ENCODE measurements at regions of chr7 and their contacts with region 1.

Region 1: DNA sequence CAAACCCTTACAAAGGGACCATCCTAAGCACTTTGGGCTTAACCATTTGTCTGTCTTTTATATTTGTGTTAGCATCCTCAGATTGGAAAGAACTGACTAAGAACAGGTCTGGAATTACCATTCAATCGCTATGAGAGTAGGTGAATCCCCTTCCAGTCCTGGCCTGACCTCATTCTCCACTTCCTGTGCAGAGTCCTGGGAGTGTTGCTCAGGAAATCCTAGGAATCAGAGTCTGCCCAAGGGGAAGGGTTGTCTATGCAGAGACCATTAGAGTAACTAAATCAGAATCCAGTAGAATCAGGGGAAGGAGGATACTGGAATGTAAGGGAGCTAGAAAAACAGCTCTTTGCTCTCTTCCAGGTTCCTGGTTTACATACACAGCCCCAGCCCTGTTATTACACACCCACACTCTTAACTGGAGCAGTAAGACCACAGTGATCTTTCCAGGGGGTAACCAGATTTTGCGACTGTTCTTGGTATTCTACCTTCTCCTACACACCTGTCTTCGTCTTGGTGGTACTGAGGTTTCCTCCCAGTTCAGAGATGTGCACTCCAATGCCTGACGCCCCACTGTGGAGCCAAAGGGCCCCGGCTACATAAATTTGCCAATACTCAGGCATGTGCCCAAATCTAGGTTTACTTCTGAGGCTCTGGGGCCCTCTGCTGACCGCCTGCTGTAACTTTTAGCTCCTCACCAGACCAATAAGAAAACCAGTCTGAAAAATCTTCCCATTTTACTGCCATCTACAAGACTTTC is 103.7 kb downstream of the RNF216 start:
- DNase-seq: no peak
- ATAC-seq: peak; percentile 81
- H3K4me3 ChIP-seq: no peak overlapping the region
- H3K27ac ChIP-seq: peak overlapping the region; percentile 10
- H3K4me1 ChIP-seq: peaks cover 50% of the 10 kb centered on the region
- H3K27me3 ChIP-seq: no peaks in the 10 kb centered on the region
- CTCF ChIP-seq: peak; percentile 68 to 74 (median 69)
- EP300 ChIP-seq: no peak
- POLR2A ChIP-seq: no peak
- RAD21 ChIP-seq: peak; percentile 77

Region 2: GRCh38 chr7:5657901-5658300 is 19.8 kb before region 1 on chr7:
- CTCF ChIA-PET with region 1: interaction called, 11 read pairs
- POLR2A ChIA-PET with region 1: no interaction called
- RAD21 ChIA-PET with region 1: interaction called, 10 read pairs
- SMC1A ChIA-PET with region 1: interaction called, 6 read pairs
- in situ Hi-C with region 1: no loop called
- intact Hi-C with region 1: no loop called
- DNase-seq: no peak
- ATAC-seq: no peak
- H3K4me3 ChIP-seq: no peak overlapping the region
- H3K27ac ChIP-seq: no peak overlapping the region
- H3K4me1 ChIP-seq: peaks cover 9% of the 10 kb centered on the region
- H3K27me3 ChIP-seq: no peaks in the 10 kb centered on the region
- CTCF ChIP-seq: no peak
- EP300 ChIP-seq: no peak
- POLR2A ChIP-seq: no peak
- RAD21 ChIP-seq: no peak

Region 3: GRCh38 chr7:5665094-5666025 is 12.4 kb before region 1 on chr7:
- CTCF ChIA-PET with region 1: interaction called, 108 read pairs
- POLR2A ChIA-PET with region 1: interaction called, 4 read pairs
- RAD21 ChIA-PET with region 1: interaction called, 32 read pairs
- SMC1A ChIA-PET with region 1: interaction called, 40 read pairs
- in situ Hi-C with region 1: no loop called
- intact Hi-C with region 1: no loop called
- DNase-seq: peak; percentile 53
- ATAC-seq: peak; percentile 94
- H3K4me3 ChIP-seq: no peak overlapping the region
- H3K27ac ChIP-seq: no peak overlapping the region
- H3K4me1 ChIP-seq: peaks cover 12% of the 10 kb centered on the region
- H3K27me3 ChIP-seq: no peaks in the 10 kb centered on the region
- CTCF ChIP-seq: peak; percentile 71 to 90 (median 82)
- EP300 ChIP-seq: no peak
- POLR2A ChIP-seq: no peak
- RAD21 ChIP-seq: peak; percentile 88

Region 4: GRCh38 chr7:5689118-5689517 is 11.4 kb after region 1 on chr7:
- CTCF ChIA-PET with region 1: interaction called, 407 read pairs
- POLR2A ChIA-PET with region 1: interaction called, 16 read pairs
- RAD21 ChIA-PET with region 1: interaction called, 79 read pairs
- SMC1A ChIA-PET with region 1: interaction called, 106 read pairs
- in situ Hi-C with region 1: no loop called
- intact Hi-C with region 1: no loop called
- DNase-seq: no peak
- ATAC-seq: no peak
- H3K4me3 ChIP-seq: no peak overlapping the region; the same call in 1 of the 2 replicates
- H3K27ac ChIP-seq: peak overlapping the region; percentile 59; the same call in 1 of the 2 replicates
- H3K4me1 ChIP-seq: peaks cover 46% of the 10 kb centered on the region
- H3K27me3 ChIP-seq: no peaks in the 10 kb centered on the region
- CTCF ChIP-seq: no peak
- EP300 ChIP-seq: no peak
- POLR2A ChIP-seq: no peak
- RAD21 ChIP-seq: no peak

Region 5: GRCh38 chr7:5694912-5695726 is 17.4 kb after region 1 on chr7:
- CTCF ChIA-PET with region 1: interaction called, 407 read pairs
- POLR2A ChIA-PET with region 1: interaction called, 16 read pairs
- RAD21 ChIA-PET with region 1: interaction called, 124 read pairs
- SMC1A ChIA-PET with region 1: interaction called, 128 read pairs
- in situ Hi-C with region 1: no loop called
- intact Hi-C with region 1: loop called (anchors 2 kb)
- DNase-seq: peak; percentile 94
- ATAC-seq: peak; percentile 67
- H3K4me3 ChIP-seq: peak overlapping the region; percentile 49
- H3K27ac ChIP-seq: peak overlapping the region; percentile 94
- H3K4me1 ChIP-seq: peaks cover 89% of the 10 kb centered on the region
- H3K27me3 ChIP-seq: no peaks in the 10 kb centered on the region
- CTCF ChIP-seq: no peak
- EP300 ChIP-seq: peak; percentile 79 to 86
- POLR2A ChIP-seq: peak; percentile 97
- RAD21 ChIP-seq: peak; percentile 17; the same call in 1 of the 2 replicates

Region 6: DNA sequence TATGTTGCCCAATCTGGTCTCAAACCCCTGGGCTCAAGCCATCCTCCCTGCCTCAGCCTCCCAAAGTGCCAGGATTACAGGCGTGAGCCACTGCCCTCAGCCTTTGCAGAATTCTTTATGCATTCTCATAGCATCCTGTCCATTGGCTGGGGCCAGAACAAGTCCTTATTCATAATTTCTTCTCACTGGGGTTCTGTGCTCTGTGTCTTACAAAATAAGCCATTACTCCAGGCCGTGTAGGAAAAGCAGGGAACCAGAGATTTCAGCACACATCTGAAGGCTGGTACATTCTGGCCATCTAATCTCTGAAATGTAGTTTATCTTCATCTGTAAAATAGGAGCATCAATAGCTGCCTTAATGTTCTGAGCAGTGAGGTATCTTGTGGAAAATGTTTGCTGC is 192.6 kb after region 1 on chr7:
- CTCF ChIA-PET with region 1: no interaction called
- POLR2A ChIA-PET with region 1: no interaction called
- RAD21 ChIA-PET with region 1: no interaction called
- SMC1A ChIA-PET with region 1: no interaction called
- in situ Hi-C with region 1: no loop called
- intact Hi-C with region 1: no loop called
- DNase-seq: no peak
- ATAC-seq: no peak
- H3K4me3 ChIP-seq: no peak overlapping the region
- H3K27ac ChIP-seq: no peak overlapping the region
- H3K4me1 ChIP-seq: no peaks in the 10 kb centered on the region
- H3K27me3 ChIP-seq: no peaks in the 10 kb centered on the region
- CTCF ChIP-seq: no peak
- EP300 ChIP-seq: no peak
- POLR2A ChIP-seq: no peak
- RAD21 ChIP-seq: no peak